ENCODE measurements at regions of chr1 and their contacts with region 1.

Region 1: DNA sequence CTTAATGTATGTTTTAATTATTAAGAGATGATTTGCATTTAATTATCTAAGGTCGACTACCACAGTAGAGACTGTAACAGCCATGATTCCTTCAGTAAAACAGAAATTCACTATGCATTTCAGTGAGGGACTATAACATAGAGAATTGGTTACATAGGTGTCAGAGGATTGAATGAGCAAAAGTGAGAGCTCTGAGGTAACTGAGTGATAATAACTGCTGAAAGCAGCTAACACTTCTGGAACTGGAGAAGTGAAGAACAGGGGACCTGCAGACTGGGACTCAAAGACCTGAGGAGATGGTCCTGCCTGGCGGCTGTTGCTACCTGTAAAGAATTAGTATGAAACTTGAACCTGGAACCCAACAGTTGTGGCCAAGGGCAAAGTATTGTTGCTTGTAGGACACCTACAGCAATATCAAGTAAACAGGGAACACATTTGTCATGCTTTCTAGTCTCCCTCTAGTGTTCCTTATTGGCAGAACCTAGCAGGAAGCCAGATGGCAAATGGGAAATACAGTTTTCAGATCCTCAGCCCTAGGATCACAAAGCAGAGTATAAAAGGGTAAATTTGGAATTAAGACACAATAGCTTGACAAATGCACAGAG is 110.6 kb downstream of the HS2ST1 start:
- DNase-seq: peak in 2 of 14 experiments; percentile 24 to 25
- ATAC-seq: peak; percentile 29
- H3K4me3 ChIP-seq: no peak overlapping the region
- H3K4me3 Mint-ChIP-seq: no peak overlapping the region
- H3K27ac ChIP-seq: no peak overlapping the region
- H3K27ac Mint-ChIP-seq: no peak overlapping the region
- H3K4me1 ChIP-seq: no peaks in the 10 kb centered on the region
- H3K4me1 Mint-ChIP-seq: peaks cover 8% of the 10 kb centered on the region
- H3K27me3 ChIP-seq: no peaks in the 10 kb centered on the region
- H3K27me3 Mint-ChIP-seq: no peaks in the 10 kb centered on the region
- CTCF ChIP-seq: peak; percentile 23

Region 2: DNA sequence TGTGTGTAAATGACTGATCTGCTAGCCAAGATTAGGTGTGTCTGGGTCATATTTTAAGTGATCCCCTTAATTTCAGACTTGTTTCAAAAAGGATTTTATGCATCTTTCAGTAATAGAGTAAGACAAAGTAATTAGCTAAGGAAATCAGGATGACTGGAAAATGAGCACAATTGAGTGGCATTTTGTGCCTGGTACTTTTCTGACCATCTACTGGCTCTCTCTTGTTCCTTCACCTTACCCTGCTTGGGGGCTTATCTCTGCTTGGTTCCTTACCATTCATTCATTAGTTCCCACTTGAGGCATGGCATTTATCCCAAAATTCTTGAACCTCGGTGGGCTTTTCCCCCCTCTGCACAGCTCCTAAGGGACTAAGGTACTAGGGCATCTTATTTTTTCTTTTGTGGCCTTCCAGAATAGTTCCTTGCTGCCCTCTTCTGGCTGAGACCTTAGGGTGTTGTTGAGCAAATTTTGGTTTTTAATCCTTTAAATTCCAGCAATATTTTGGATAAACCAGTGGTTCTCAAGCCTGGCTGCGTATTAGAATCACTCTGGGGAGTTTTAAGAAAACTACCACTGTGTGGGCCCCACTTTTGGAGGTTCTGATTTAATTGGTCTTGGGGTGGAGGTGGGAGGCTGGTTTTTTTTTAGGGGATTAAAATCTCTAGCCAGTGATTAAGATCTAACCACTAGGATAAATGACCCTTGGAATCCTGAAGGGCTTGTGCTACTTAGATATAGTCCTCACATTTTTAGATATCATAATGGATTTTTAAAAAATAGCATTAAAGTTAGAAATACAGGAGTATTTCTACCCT is 59.8 kb before region 1 on chr1:
- CTCF ChIA-PET with region 1: no interaction called
- POLR2A ChIA-PET with region 1: no interaction called
- intact Hi-C with region 1: loop called in 1 of 2 experiments (anchors 2 kb)
- DNase-seq: peak in 5 of 14 experiments; percentile 1 to 50 (median 29)
- ATAC-seq: no peak
- H3K4me3 ChIP-seq: no peak overlapping the region
- H3K4me3 Mint-ChIP-seq: no peak overlapping the region
- H3K27ac ChIP-seq: no peak overlapping the region
- H3K27ac Mint-ChIP-seq: no peak overlapping the region
- H3K4me1 ChIP-seq: no peaks in the 10 kb centered on the region
- H3K4me1 Mint-ChIP-seq: no peaks in the 10 kb centered on the region
- H3K27me3 ChIP-seq: no peaks in the 10 kb centered on the region
- H3K27me3 Mint-ChIP-seq: no peaks in the 10 kb centered on the region
- CTCF ChIP-seq: peak; percentile 61